B cell (primary cell): ENCODE measurements at regions of chr22 and their contacts with region 1.

Region 1: DNA sequence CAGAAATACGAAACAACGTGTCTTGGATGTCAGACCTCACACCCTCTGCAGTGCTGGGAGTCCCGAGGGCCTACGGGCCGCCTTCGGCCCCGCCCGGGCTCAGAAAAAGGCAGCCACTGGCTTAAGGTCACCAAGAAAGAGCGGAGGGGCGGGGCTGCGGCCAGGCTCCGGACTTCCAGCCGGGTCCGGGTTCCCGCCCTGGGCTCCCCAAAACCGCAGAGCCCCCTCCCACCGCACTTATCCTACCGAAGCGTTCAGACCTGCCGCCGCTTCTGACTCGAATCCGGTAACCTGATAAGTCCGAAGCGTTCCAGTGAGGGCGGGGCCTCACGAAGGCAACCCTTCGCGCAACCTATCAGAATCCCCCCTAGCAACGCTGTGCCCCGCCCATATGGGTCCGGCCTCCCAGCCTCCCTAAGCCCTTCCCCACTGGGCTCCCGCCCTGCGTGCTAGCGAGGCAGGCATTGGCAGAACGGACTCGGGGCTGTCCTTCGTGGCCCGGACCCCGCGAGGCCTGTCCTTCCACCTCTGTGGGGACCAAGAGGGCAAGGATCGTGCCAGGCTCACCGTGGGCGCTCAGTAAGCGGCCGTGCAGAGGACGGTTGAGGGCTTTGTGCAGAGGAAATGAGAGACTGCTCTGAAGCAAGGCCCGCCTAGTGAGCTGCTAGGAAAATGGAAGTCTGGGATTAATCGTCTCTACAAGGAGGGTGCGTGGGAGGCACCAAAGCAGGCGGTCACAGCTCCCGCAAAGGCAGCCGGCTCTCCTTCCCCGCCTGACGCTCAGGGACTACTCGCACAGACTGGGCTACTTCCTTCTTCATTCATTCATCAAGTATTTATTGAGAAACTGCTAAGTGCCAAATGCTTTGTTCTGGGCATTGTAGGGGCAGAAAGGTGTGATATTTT is at the start of gene NAGA:
- DNase-seq: peak; percentile 93
- ATAC-seq: peak; percentile 95
- H3K4me3 ChIP-seq: peak within 1 kb of the TSS; percentile 30 to 98 (median 82)
- H3K4me3 Mint-ChIP-seq: peak within 1 kb of the TSS; percentile 93
- H3K27ac ChIP-seq: peak within 1 kb of the TSS; percentile 64 to 69
- H3K27ac Mint-ChIP-seq: peak within 1 kb of the TSS; percentile 94
- H3K4me1 ChIP-seq: peaks cover 20 to 34% of the 10 kb centered on the region in 2 donors
- H3K4me1 Mint-ChIP-seq: peaks cover 46% of the 10 kb centered on the region
- H3K27me3 ChIP-seq: no peaks in the 10 kb centered on the region
- H3K27me3 Mint-ChIP-seq: no peaks in the 10 kb centered on the region
- CTCF ChIP-seq: no peak
- total RNA-seq, gene NAGA: 20.2 and 21.0 TPM in 2 replicates

Region 2: GRCh38 chr22:41780746-41781505 is 289.8 kb before region 1 on chr22:
- CTCF ChIA-PET with region 1: no interaction called
- POLR2A ChIA-PET with region 1: no interaction called
- intact Hi-C with region 1: loop called (anchors 5 kb)
- DNase-seq: peak; percentile 94
- ATAC-seq: peak; percentile 96
- H3K4me3 ChIP-seq: peak overlapping the region; percentile 47 to 76 (median 60)
- H3K4me3 Mint-ChIP-seq: peak overlapping the region; percentile 88
- H3K27ac ChIP-seq: peak overlapping the region; percentile 90 to 95
- H3K27ac Mint-ChIP-seq: peak overlapping the region; percentile 98
- H3K4me1 ChIP-seq: peaks cover 26 to 31% of the 10 kb centered on the region in 2 donors
- H3K4me1 Mint-ChIP-seq: peaks cover 37% of the 10 kb centered on the region
- H3K27me3 ChIP-seq: no peaks in the 10 kb centered on the region
- H3K27me3 Mint-ChIP-seq: no peaks in the 10 kb centered on the region
- CTCF ChIP-seq: no peak

Region 3: DNA sequence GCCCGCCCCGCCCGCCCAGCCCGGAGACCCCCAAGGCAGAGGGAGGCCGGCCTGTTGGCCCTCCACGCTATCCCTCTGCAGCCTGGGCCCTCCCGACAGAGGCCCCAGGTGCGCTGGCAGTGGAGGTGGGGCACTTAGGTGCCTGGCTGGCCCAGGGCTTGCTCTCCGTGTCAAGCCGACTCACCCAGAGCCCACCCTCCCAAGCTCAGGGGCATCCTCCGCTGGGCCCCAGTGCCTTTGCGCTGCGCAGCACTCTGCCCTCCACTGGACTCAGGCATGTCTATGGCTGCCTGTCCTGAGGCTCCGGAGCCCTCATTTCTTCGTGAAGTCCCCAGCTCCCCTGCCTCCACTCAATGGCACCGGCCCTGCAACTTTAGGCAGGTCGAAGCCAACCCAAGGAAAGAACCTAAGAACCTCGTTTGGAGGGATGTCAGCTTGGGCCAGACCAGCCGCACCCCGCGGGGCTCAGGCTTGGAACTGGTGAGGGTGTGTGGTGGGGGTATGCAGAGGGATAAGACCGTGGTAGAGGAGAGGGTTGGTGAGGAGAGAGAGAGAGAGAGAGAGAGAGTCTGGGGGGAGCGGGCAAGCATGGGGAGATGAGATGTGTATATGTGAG is 112.7 kb before region 1 on chr22:
- CTCF ChIA-PET with region 1: no interaction called
- POLR2A ChIA-PET with region 1: no interaction called
- intact Hi-C with region 1: loop called (anchors 5 kb)
- DNase-seq: no peak
- ATAC-seq: peak; percentile 28
- H3K4me3 ChIP-seq: peak overlapping the region in 1 of 5 experiments; percentile 19
- H3K4me3 Mint-ChIP-seq: peak overlapping the region; percentile 26
- H3K27ac ChIP-seq: no peak overlapping the region
- H3K27ac Mint-ChIP-seq: no peak overlapping the region
- H3K4me1 ChIP-seq: peaks cover 11 to 22% of the 10 kb centered on the region in 2 donors
- H3K4me1 Mint-ChIP-seq: peaks cover 21% of the 10 kb centered on the region
- H3K27me3 ChIP-seq: no peaks in the 10 kb centered on the region
- H3K27me3 Mint-ChIP-seq: no peaks in the 10 kb centered on the region
- CTCF ChIP-seq: peak; percentile 44

Region 4: DNA sequence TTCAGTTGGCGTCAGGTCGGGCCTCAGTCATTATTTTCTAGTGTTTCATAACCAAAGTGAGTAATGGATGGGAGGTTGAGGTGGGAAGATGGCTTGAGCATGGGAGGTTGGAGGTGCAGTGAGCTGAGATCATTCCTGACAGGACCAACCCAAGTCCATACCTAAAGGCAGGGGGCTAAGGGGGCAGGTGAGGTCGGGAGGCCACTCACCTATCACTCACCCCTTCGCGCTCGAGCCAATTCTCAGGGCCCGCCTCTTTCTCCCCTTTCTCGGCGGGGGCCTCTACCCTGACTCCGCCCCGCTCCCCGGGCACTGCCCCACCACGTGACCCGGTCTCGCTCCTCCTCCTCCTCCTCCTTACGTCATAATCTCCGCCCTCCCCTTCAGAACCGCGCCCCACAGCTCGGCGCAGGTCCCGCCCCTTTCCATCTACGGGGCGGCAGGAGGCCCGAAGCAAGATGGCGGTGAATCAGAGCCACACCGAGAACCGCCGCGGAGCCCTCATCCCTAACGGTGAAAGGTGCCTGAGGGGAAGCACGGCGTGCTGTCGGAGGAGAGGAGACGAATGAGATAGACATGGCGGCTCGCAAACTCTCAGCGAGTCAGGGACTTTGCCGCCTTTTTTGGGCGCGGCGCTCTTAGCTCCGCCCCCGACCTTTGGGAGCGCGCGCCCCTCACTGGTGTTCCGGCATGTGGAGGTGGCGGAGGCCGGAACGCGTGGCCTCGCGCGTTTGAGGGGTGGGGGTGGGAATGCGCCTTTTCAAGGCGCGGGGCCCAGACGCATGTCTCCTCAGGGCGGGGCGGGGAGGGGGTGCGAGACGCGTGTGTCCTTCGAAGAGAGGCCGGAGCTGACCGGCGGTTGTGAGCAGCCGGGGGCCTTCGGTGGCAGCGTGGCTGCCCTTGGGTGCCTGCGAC is 72.2 kb before region 1 on chr22 and contains the start of gene WBP2NL:
- CTCF ChIA-PET with region 1: interaction called, 6 read pairs
- POLR2A ChIA-PET with region 1: interaction called, 3 read pairs
- intact Hi-C with region 1: loop called (anchors 1 kb)
- DNase-seq: peak; percentile 95
- ATAC-seq: peak; percentile 100
- H3K4me3 ChIP-seq: peak within 1 kb of the TSS; percentile 36 to 88 (median 76)
- H3K4me3 Mint-ChIP-seq: peak within 1 kb of the TSS; percentile 99
- H3K27ac ChIP-seq: peak within 1 kb of the TSS; percentile 72 to 81
- H3K27ac Mint-ChIP-seq: peak within 1 kb of the TSS; percentile 99
- H3K4me1 ChIP-seq: peaks cover 15 to 23% of the 10 kb centered on the region in 2 donors
- H3K4me1 Mint-ChIP-seq: peaks cover 25% of the 10 kb centered on the region
- H3K27me3 ChIP-seq: peaks cover 0 to 10% (median 3%) of the 10 kb centered on the region in 4 experiments
- H3K27me3 Mint-ChIP-seq: no peaks in the 10 kb centered on the region
- CTCF ChIP-seq: no peak
- total RNA-seq, gene WBP2NL: 10.1 and 10.4 TPM in 2 replicates

Region 5: GRCh38 chr22:42033263-42034181 is 37.2 kb before region 1 on chr22:
- CTCF ChIA-PET with region 1: no interaction called
- POLR2A ChIA-PET with region 1: no interaction called
- intact Hi-C with region 1: loop called (anchors 5 kb)
- DNase-seq: no peak
- ATAC-seq: no peak
- H3K4me3 ChIP-seq: no peak overlapping the region
- H3K4me3 Mint-ChIP-seq: no peak overlapping the region
- H3K27ac ChIP-seq: no peak overlapping the region
- H3K27ac Mint-ChIP-seq: peak overlapping the region; percentile 20
- H3K4me1 ChIP-seq: peaks cover 0 to 18% of the 10 kb centered on the region in 2 donors
- H3K4me1 Mint-ChIP-seq: peaks cover 24% of the 10 kb centered on the region
- H3K27me3 ChIP-seq: no peaks in the 10 kb centered on the region
- H3K27me3 Mint-ChIP-seq: no peaks in the 10 kb centered on the region
- CTCF ChIP-seq: no peak

Region 6: GRCh38 chr22:42270512-42271417 is 200.0 kb after region 1 on chr22 and contains the start of gene TCF20:
- CTCF ChIA-PET with region 1: no interaction called
- POLR2A ChIA-PET with region 1: no interaction called
- intact Hi-C with region 1: loop called (anchors 1 kb)
- DNase-seq: peak; percentile 90
- ATAC-seq: peak; percentile 81
- H3K4me3 ChIP-seq: peak within 1 kb of the TSS; percentile 34 to 93 (median 87)
- H3K4me3 Mint-ChIP-seq: peak within 1 kb of the TSS; percentile 91
- H3K27ac ChIP-seq: peak within 1 kb of the TSS; percentile 61 to 86
- H3K27ac Mint-ChIP-seq: peak within 1 kb of the TSS; percentile 87
- H3K4me1 ChIP-seq: peaks cover 14 to 19% of the 10 kb centered on the region in 2 donors
- H3K4me1 Mint-ChIP-seq: peaks cover 26% of the 10 kb centered on the region
- H3K27me3 ChIP-seq: no peaks in the 10 kb centered on the region
- H3K27me3 Mint-ChIP-seq: no peaks in the 10 kb centered on the region
- CTCF ChIP-seq: no peak
- total RNA-seq, gene TCF20: 67.0 and 81.3 TPM in 2 replicates